ENCODE measurements at regions of chr12 and their contacts with region 1.

Region 1: DNA sequence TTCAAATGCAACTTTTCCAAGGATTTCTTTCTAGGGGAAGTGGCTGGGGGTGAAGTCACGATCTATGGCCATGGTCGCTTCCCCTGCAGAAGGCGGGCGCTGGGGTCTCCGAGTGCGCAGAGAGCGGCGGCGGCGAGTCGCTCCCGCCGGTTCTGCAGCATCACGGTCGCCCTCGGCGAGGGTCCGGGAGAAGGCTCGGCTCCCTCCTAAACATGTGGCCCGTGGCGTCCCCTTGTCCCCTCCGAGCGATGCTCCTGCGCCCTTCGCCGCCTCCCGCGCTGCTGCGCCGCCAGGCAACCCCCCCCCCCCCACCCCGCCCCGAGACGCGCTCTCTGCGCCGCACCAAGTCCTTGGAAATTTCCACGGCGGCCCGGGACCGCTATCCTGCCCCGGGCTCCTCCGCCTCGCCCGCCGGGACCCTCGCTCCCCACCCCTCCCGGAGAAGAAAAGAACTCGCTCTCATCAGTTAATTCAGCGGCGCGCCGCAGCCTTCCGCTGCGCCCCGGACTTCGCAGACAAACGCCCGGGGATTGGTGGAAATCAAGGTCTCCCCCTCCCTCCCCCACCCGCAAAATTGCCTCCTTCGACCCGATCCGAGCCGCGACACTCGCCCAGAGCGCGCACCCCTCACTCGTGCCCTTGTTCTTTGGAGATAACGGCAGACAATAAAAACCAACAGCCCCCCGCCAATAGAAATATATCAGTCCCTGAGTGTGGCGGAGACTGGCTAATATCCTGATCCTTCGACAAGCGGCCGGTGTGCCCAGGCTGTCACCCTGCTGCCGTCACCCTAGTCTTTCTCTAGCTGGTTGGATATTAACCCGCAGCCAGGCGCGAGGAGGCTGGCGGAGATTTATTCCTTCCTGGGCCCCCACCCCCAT is at the start of gene ST8SIA1:
- DNase-seq: peak in 1 of 2 experiments; percentile 36
- ATAC-seq: peak; percentile 55 to 59
- H3K4me3 ChIP-seq: peak within 1 kb of the TSS; percentile 57
- H3K27ac ChIP-seq: peak within 1 kb of the TSS; percentile 39 to 72
- H3K4me1 ChIP-seq: peaks cover 8% of the 10 kb centered on the region; the same call in 1 of the 3 replicates
- CTCF ChIP-seq: no peak
- EP300 ChIP-seq: no peak
- POLR2A ChIP-seq: no peak
- RAD21 ChIP-seq: no peak
- polyA plus RNA-seq, gene ST8SIA1: 1.1 and 1.6 TPM in 2 replicates

Region 2: DNA sequence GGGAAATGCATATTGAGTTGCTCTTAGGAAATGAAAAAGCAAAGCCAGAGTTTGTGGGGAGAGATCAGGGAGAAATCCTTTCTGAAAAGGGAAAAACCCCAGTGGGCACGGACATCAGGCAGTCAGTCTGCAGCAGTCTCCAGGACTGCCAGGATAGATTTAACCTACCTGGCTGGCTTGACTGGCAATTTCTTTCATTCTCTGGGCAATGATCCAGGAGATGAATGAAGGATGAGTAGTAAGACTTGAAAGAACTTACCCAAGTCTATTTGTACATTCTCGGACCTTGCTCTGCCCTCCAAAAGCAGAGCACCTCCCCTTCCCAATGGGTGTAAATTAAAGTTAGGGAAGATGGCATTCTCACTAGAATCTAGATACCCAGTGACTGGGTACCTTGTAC is 245.8 kb before region 1 on chr12:
- CTCF ChIA-PET with region 1: interaction called, 17 read pairs
- POLR2A ChIA-PET with region 1: no interaction called
- DNase-seq: no peak
- ATAC-seq: no peak
- H3K4me3 ChIP-seq: no peak overlapping the region
- H3K27ac ChIP-seq: no peak overlapping the region
- H3K4me1 ChIP-seq: no peaks in the 10 kb centered on the region
- CTCF ChIP-seq: no peak
- EP300 ChIP-seq: no peak
- POLR2A ChIP-seq: no peak
- RAD21 ChIP-seq: no peak

Region 3: GRCh38 chr12:22100958-22101748 is 233.5 kb before region 1 on chr12:
- CTCF ChIA-PET with region 1: interaction called, 30 read pairs
- POLR2A ChIA-PET with region 1: no interaction called
- DNase-seq: peak in 1 of 2 experiments; percentile 60
- ATAC-seq: peak; percentile 50 to 80; a peak in 4 of 6 replicates
- H3K4me3 ChIP-seq: no peak overlapping the region
- H3K27ac ChIP-seq: no peak overlapping the region
- H3K4me1 ChIP-seq: no peaks in the 10 kb centered on the region
- CTCF ChIP-seq: peak; percentile 41
- EP300 ChIP-seq: no peak
- POLR2A ChIP-seq: no peak
- RAD21 ChIP-seq: peak; percentile 45 to 61; a peak in 4 of 5 replicates

Region 4: GRCh38 chr12:22765421-22766130 is 430.9 kb after region 1 on chr12:
- CTCF ChIA-PET with region 1: no interaction called
- POLR2A ChIA-PET with region 1: no interaction called
- DNase-seq: no peak
- ATAC-seq: no peak
- H3K4me3 ChIP-seq: no peak overlapping the region
- H3K27ac ChIP-seq: no peak overlapping the region
- H3K4me1 ChIP-seq: no peaks in the 10 kb centered on the region
- CTCF ChIP-seq: no peak
- EP300 ChIP-seq: no peak
- POLR2A ChIP-seq: no peak
- RAD21 ChIP-seq: no peak

Measured in A549 (cell line).